Activated CD4-positive, alpha-beta memory T cell treated with anti-CD3 and anti-CD28 coated beads for 36 hours (primary cell): ENCODE measurements at regions of chr1 and their contacts with region 1.

Region 1: DNA sequence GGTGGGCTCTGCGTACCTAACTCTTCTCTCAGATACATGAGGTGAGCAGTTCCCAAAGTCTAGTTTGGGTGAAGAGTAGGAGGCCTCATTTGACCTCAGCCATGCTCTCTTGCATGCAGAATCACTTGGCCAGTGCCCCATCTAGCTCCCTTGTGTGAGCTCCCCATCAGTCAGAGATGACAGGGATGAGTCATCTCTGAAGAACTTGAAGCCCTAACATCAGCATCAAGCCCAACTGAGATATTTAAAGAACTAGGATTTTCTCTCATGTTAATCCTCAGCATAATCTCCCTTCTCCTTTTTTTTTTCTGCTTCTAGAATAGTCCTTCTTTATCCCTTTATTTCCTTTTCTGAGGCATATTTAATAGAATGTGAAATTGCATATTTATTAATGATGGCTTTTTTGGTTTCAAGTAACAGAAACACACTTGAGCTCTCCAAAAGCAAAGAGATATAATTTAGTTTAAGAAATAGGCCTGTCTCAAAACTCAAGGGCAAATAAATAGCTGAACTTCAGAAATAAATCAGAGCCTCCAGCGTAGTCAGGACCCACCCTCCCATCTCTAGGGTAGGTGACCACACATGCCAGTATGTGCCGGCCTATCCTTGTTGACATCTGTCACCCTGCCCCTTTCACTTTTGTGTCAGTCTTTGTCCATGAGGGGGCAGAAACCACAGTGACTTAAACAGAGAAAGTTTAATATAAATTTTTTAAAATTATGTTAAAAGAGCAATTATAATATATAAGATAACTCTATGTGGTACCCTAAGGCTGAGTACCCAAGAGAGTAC is 112.3 kb downstream of the TSEN15 start:
- DNase-seq: peak; percentile 31
- H3K4me3 Mint-ChIP-seq: no peak overlapping the region
- H3K27ac Mint-ChIP-seq: no peak overlapping the region
- H3K4me1 Mint-ChIP-seq: peaks cover 14% of the 10 kb centered on the region
- H3K27me3 Mint-ChIP-seq: peaks cover 1% of the 10 kb centered on the region

Region 2: GRCh38 chr1:183635606-183636333 is 528.1 kb before region 1 on chr1 and contains the start of gene ARPC5:
- CTCF ChIA-PET with region 1: no interaction called
- POLR2A ChIA-PET with region 1: no interaction called
- intact Hi-C with region 1: loop called (anchors 10 kb)
- DNase-seq: peak; percentile 98
- H3K4me3 Mint-ChIP-seq: peak within 1 kb of the TSS; percentile 95
- H3K27ac Mint-ChIP-seq: peak within 1 kb of the TSS; percentile 99
- H3K4me1 Mint-ChIP-seq: peaks cover 33% of the 10 kb centered on the region
- H3K27me3 Mint-ChIP-seq: no peaks in the 10 kb centered on the region
- total RNA-seq, gene ARPC5: 158 to 161 TPM

Region 3: DNA sequence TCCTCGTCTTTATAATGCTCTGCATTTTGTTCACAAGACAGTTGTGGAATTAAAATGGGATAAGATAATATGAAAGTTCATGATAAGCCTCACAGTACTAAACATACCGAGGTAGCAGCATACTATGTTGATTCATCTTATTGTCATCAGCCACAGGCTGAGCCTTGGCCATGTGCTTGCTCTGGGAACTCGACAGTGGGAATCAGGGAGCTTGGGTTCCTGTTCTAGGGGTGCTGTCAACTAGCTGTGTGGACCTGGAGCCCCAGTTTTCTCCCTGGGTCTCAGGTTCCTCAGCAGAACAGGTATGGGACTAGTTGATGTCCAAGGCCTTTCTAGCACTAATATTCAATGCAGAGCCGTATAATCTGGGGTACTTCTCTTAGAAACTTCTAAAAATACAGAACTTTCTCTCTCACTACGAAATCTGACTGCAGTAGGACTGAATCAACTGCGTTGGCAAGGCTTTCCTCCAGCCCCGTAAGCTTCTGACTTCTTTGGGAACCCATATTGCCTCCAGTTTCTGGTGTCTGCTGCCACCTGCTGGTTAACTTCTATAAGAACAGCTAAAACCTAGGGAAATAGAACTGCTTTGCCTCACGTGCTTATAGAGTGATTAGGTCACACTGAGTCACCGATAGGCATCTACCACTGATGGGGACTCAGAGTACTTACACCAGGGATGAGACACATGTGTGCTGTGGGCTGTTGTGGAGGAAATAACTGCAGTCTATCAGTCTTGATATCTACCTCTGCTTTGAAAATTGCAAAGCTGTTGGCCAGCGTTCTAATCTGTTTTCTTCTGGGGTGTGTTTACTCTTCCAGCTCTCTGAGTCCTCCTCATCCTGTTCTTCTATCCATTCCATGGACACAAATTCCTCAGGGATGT is 248.0 kb before region 1 on chr1:
- CTCF ChIA-PET with region 1: interaction called, 3 read pairs
- POLR2A ChIA-PET with region 1: no interaction called
- intact Hi-C with region 1: loop called (anchors 5 kb)
- DNase-seq: peak; percentile 83
- H3K4me3 Mint-ChIP-seq: no peak overlapping the region
- H3K27ac Mint-ChIP-seq: peak overlapping the region; percentile 46
- H3K4me1 Mint-ChIP-seq: peaks cover 13% of the 10 kb centered on the region
- H3K27me3 Mint-ChIP-seq: no peaks in the 10 kb centered on the region

Region 4: GRCh38 chr1:183982172-183982963 is 181.5 kb before region 1 on chr1:
- CTCF ChIA-PET with region 1: no interaction called
- POLR2A ChIA-PET with region 1: no interaction called
- intact Hi-C with region 1: no loop called
- DNase-seq: no peak
- H3K4me3 Mint-ChIP-seq: no peak overlapping the region
- H3K27ac Mint-ChIP-seq: no peak overlapping the region
- H3K4me1 Mint-ChIP-seq: no peaks in the 10 kb centered on the region
- H3K27me3 Mint-ChIP-seq: no peaks in the 10 kb centered on the region

Region 5: DNA sequence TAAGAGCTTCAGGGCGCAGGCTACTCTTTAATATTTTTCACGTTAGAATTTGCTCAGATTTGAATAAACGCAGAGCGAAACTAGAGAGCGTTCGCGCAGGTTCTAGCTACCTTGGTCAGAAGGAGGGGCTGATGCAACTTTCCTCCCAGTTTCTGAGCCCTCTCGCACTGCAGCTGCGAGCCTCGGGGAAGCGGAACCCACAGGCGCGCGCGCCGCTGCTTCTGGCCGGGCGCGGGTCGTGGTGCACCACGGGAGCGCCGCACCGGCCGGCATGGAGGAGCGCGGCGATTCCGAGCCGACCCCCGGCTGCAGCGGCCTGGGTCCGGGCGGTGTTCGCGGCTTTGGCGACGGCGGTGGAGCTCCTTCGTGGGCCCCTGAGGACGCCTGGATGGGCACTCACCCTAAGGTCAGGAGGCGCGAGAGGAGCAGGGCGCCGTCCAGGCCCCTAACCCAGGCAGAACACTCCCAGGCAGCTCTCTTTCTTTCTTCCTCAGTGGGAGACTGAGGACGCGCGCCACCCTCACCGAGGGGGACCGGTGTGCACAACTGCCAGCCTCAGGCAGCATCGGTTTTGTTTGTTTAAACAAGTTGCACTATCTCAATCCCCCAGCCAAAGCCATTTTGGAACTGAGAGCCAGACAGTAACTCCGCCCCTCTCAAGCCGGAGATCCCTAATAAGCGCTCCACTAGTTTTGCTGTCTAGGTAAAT is 112.2 kb before region 1 on chr1 and contains the start of gene TSEN15:
- CTCF ChIA-PET with region 1: interaction called, 4 read pairs
- POLR2A ChIA-PET with region 1: interaction called, 3 read pairs
- intact Hi-C with region 1: loop called (anchors 1 kb)
- DNase-seq: peak; percentile 85
- H3K4me3 Mint-ChIP-seq: peak within 1 kb of the TSS; percentile 98
- H3K27ac Mint-ChIP-seq: peak within 1 kb of the TSS; percentile 96
- H3K4me1 Mint-ChIP-seq: peaks cover 33% of the 10 kb centered on the region
- H3K27me3 Mint-ChIP-seq: peaks cover 6% of the 10 kb centered on the region
- total RNA-seq, gene TSEN15: 44.1 to 44.3 TPM

Region 6: GRCh38 chr1:184222652-184223052 is 58.8 kb after region 1 on chr1:
- CTCF ChIA-PET with region 1: interaction called, 6 read pairs
- POLR2A ChIA-PET with region 1: no interaction called
- intact Hi-C with region 1: loop called (anchors 5 kb)
- DNase-seq: peak; percentile 47
- H3K4me3 Mint-ChIP-seq: no peak overlapping the region
- H3K27ac Mint-ChIP-seq: no peak overlapping the region
- H3K4me1 Mint-ChIP-seq: no peaks in the 10 kb centered on the region
- H3K27me3 Mint-ChIP-seq: no peaks in the 10 kb centered on the region

Region 7: GRCh38 chr1:184881941-184882913 is 718.4 kb after region 1 on chr1:
- CTCF ChIA-PET with region 1: no interaction called
- POLR2A ChIA-PET with region 1: no interaction called
- intact Hi-C with region 1: loop called (anchors 2 kb)
- DNase-seq: peak; percentile 48
- H3K4me3 Mint-ChIP-seq: peak overlapping the region; percentile 13
- H3K27ac Mint-ChIP-seq: peak overlapping the region; percentile 92
- H3K4me1 Mint-ChIP-seq: peaks cover 33% of the 10 kb centered on the region
- H3K27me3 Mint-ChIP-seq: peaks cover 2% of the 10 kb centered on the region